ENCODE measurements at regions of chr9 and their contacts with region 1.

Region 1: GRCh38 chr9:101311758-101312420 is 72.9 kb downstream of the BAAT start:
- DNase-seq: peak in 1 of 2 experiments; percentile 61
- H3K4me3 ChIP-seq: no peak overlapping the region
- H3K27ac ChIP-seq: no peak overlapping the region
- H3K4me1 ChIP-seq: no peaks in the 10 kb centered on the region
- H3K27me3 ChIP-seq: peaks cover 42% of the 10 kb centered on the region
- CTCF ChIP-seq: peak; percentile 83

Region 2: GRCh38 chr9:100714372-100715099 is 597.4 kb before region 1 on chr9:
- CTCF ChIA-PET with region 1: no interaction called
- POLR2A ChIA-PET with region 1: no interaction called
- intact Hi-C with region 1: loop called (anchors 1 kb)
- DNase-seq: peak in 1 of 2 experiments; percentile 46
- H3K4me3 ChIP-seq: no peak overlapping the region
- H3K27ac ChIP-seq: no peak overlapping the region
- H3K4me1 ChIP-seq: no peaks in the 10 kb centered on the region
- H3K27me3 ChIP-seq: no peaks in the 10 kb centered on the region
- CTCF ChIP-seq: peak; percentile 88

Region 3: DNA sequence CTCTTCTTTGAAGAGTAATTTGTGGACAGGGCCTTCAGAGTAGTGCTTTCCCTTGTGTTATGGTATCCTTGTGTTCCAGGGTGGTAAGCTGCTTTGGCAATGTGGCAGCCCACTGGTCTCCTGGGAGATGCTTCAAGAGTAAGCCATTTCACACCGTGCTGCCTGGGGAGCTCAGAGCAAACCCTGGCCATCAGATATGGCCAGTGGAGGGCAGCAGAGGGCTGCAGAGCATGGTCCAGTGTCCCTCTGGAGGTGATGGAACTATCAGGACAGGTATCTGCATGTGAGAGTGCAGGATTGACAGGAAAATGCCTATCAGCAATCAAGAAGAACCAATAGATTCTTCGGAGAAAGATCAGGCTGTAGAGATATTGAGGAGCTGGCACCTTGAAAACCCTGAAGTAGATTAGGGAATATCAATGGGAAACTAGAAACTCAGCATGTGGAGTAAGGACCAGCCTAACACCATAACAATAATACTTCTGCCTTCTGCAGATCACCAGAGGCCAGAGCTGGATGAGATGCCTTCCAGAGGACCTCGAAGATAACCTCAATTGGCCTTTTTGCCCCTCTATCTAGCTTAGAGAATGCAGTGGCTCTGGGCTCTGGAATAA is 192.6 kb before region 1 on chr9:
- CTCF ChIA-PET with region 1: interaction called, 6 read pairs
- POLR2A ChIA-PET with region 1: no interaction called
- intact Hi-C with region 1: loop called (anchors 1 kb)
- DNase-seq: peak; percentile 38 to 40
- H3K4me3 ChIP-seq: no peak overlapping the region
- H3K27ac ChIP-seq: no peak overlapping the region
- H3K4me1 ChIP-seq: no peaks in the 10 kb centered on the region
- H3K27me3 ChIP-seq: no peaks in the 10 kb centered on the region
- CTCF ChIP-seq: peak; percentile 75

Measured in PC-9 (cell line).